Endothelial cell of umbilical vein (primary cell): ENCODE measurements at regions of chr10 and their contacts with region 1.

Region 1: DNA sequence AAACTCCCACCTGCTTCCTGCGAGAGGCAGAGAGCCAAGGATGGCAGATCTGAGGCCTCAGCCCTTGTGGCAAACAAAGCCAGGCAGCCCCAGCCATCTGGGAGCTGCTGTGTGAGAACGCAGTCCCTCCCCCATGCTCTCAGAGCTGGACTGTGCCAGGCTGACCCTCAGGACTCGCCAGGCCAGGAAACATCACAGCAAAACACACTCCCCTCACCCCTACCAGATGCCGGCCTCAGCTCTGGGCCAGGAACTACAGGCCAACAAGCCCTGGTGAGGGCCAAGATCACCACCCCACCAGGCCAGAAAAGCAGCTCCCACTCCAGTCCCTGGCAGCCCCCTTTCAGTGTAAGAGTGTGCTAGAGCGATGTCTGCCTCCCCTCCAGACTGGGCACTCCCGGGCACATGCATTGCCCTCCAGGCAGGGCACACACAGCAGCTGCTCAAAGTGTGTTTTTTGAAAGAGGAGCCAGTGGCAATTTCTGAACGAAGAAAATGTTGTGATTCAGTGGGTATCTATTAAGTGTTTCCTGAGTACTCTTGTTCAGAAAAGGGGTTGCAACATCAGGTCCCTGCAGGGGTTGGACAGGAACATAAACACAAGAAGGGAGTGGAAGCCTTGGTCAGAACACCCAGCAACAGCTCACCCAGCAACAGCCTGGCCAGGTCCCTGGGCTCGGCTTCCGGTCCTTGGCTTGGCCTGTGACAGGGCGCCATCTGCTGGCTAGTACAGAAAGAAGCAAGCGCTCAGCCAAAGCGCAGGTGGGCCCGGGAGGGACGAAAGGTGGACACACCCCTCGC is 18.3 kb downstream of the LRRC20 start:
- DNase-seq: peak; percentile 79
- H3K4me3 ChIP-seq: no peak overlapping the region
- H3K27ac ChIP-seq: no peak overlapping the region
- H3K4me1 ChIP-seq: no peaks in the 10 kb centered on the region
- H3K27me3 ChIP-seq: no peaks in the 10 kb centered on the region
- CTCF ChIP-seq: peak; percentile 82 to 95
- POLR2A ChIP-seq: no peak

Region 2: DNA sequence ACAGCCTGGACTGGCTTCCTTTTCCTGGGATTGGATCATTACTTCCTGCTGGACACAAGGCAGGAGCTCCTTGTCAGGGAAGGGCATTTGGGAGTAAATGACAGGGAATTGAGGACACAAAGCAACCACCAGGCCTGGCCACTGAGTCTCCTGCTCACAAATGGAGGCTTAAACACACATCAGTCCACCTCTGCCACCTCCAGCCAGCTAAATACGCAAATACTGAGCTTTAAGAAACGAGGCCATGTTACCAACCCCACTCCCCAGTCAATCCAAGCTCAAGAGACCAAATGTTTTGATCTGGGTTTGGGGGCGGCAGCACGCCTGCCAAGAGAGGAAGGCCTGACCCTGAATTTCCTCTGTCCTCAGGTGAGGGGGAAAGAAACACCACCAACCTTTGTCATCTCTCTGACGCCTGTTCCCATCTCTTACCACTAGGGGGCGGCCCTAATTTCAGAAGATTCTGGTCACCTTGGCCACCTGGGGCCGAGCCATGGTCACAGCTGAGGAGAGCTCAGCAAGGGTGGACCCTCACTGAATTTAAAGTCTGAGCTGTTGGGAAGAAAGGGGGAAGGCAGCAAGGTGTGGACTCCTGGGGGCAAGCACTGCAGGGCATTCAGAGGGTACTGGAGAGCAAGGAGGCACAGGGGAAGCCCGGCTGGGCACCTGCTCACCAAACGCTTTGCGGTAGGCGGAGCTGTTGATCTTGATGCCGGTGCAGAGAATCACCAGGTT is 248.1 kb before region 1 on chr10:
- CTCF ChIA-PET with region 1: interaction called, 18 read pairs
- POLR2A ChIA-PET with region 1: no interaction called
- dilution Hi-C with region 1: no loop called
- intact Hi-C with region 1: loop called (anchors 1 kb)
- DNase-seq: peak; percentile 35
- H3K4me3 ChIP-seq: no peak overlapping the region
- H3K27ac ChIP-seq: no peak overlapping the region
- H3K4me1 ChIP-seq: peaks cover 6% of the 10 kb centered on the region
- H3K27me3 ChIP-seq: no peaks in the 10 kb centered on the region
- CTCF ChIP-seq: peak; percentile 85 to 95
- POLR2A ChIP-seq: no peak

Region 3: GRCh38 chr10:70227548-70228320 is 136.4 kb before region 1 on chr10:
- CTCF ChIA-PET with region 1: interaction called, 498 read pairs
- POLR2A ChIA-PET with region 1: interaction called, 3 read pairs
- dilution Hi-C with region 1: no loop called
- intact Hi-C with region 1: no loop called
- DNase-seq: no peak
- H3K4me3 ChIP-seq: no peak overlapping the region
- H3K27ac ChIP-seq: no peak overlapping the region
- H3K4me1 ChIP-seq: peaks cover 7% of the 10 kb centered on the region
- H3K27me3 ChIP-seq: no peaks in the 10 kb centered on the region
- CTCF ChIP-seq: no peak
- POLR2A ChIP-seq: no peak

Region 4: DNA sequence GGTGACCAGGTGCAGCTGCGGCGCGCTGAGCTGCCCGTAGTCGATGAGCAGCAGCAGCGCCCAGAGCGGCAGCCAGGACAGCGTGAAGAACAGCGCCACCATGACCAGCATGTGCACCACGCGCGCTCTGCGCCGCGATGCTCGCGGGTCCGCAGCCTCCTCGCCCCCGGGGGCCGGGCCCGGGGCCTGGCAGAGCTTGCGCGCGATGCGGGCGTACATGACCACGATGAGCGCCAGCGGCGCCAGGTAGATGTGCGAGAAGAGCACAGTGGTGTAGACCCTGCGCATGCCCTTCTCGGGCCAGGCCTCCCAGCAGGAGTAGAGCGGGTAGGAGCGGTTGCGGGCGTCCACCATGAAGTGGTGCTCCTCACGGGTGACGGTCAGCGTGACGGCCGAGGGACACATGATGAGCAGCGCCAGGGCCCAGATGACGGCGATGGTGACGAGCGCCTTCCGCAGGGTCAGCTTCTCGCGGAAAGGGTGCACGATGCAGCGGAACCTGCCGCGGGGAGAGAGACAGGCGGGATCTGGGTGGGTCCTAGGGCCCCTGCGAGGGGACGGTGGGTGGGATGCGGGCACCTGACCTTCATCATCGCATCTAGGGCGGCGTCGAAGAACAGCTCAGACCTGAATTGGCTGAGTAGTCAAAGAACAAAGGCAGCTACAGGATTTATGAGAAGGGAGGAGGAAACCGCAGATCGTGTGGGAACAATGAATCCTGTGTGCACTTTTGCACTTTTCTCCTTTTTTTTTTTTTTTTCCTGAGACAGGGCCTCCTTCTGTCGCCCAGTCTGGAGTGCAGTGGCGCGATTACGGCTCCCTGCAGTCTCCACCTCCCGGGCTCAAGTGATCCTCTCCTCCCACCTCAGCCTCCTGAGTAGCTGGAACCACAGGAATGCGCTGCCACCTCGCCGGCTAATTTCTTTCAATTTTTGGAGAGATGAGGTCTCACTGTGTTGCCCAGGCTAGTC is 108.6 kb before region 1 on chr10:
- CTCF ChIA-PET with region 1: interaction called, 11 read pairs
- POLR2A ChIA-PET with region 1: no interaction called
- dilution Hi-C with region 1: no loop called
- intact Hi-C with region 1: no loop called
- DNase-seq: peak; percentile 45
- H3K4me3 ChIP-seq: no peak overlapping the region
- H3K27ac ChIP-seq: no peak overlapping the region
- H3K4me1 ChIP-seq: peaks cover 3% of the 10 kb centered on the region
- H3K27me3 ChIP-seq: peaks cover 48 to 64% of the 10 kb centered on the region in 2 experiments
- CTCF ChIP-seq: peak in 1 of 2 donors; percentile 7
- POLR2A ChIP-seq: no peak

Region 5: DNA sequence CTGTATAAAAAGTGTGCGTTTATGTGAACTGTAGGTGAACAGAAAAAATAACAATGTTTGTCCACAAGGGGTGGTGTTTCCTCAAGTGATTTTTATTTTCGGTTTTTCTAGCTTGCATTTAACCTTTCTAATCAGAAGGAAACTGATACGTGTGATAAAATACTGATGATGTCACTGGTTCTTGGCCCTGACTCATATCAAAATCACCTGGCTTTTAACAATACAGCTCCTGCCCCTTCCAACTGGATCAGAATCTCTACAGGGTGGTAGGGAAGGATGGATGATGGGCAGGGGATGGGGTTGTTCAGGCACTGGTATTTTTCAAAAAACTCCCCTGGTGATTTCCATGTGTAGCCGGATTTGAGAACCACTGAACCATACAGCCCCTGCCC is 91.2 kb before region 1 on chr10:
- CTCF ChIA-PET with region 1: interaction called, 30 read pairs
- POLR2A ChIA-PET with region 1: no interaction called
- dilution Hi-C with region 1: no loop called
- intact Hi-C with region 1: loop called (anchors 2 kb)
- DNase-seq: peak; percentile 21
- H3K4me3 ChIP-seq: no peak overlapping the region
- H3K27ac ChIP-seq: no peak overlapping the region
- H3K4me1 ChIP-seq: no peaks in the 10 kb centered on the region
- H3K27me3 ChIP-seq: peaks cover 10 to 20% of the 10 kb centered on the region in 2 experiments
- CTCF ChIP-seq: peak; percentile 31 to 32
- POLR2A ChIP-seq: no peak

Region 6: DNA sequence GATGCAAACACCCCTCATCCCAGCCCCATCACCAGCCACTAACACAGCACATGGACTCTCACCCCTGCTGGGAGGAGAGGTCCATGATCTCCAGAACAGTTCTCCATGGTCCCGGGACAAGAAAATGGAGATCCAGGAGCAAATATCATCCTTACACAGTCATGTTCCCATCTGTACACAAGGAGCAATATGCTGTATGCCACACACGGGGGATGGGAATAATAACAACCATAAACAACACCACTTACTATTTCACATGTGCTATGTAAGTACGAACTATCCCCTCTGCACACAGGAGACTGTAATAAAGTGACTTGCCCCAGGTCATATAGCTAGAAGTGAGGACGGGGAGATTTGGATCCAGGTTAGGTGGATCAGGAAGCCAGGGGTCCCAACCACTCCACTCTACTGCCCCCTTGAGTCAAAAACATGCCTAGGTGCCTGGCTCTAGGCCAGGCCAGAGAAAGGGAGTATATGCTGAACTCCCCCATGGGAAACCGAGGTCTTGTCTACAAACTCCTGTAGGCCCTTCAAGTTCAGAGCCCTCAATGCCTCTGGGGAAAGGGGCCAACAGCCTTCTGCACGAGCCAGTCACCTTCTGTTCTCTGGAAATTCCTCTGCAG is 15.8 kb before region 1 on chr10:
- CTCF ChIA-PET with region 1: interaction called, 17 read pairs
- POLR2A ChIA-PET with region 1: no interaction called
- dilution Hi-C with region 1: no loop called
- intact Hi-C with region 1: no loop called
- DNase-seq: peak; percentile 30
- H3K4me3 ChIP-seq: no peak overlapping the region
- H3K27ac ChIP-seq: no peak overlapping the region
- H3K4me1 ChIP-seq: no peaks in the 10 kb centered on the region
- H3K27me3 ChIP-seq: peaks cover 0 to 4% of the 10 kb centered on the region in 2 experiments
- CTCF ChIP-seq: peak; percentile 42 to 63
- POLR2A ChIP-seq: no peak

Region 7: DNA sequence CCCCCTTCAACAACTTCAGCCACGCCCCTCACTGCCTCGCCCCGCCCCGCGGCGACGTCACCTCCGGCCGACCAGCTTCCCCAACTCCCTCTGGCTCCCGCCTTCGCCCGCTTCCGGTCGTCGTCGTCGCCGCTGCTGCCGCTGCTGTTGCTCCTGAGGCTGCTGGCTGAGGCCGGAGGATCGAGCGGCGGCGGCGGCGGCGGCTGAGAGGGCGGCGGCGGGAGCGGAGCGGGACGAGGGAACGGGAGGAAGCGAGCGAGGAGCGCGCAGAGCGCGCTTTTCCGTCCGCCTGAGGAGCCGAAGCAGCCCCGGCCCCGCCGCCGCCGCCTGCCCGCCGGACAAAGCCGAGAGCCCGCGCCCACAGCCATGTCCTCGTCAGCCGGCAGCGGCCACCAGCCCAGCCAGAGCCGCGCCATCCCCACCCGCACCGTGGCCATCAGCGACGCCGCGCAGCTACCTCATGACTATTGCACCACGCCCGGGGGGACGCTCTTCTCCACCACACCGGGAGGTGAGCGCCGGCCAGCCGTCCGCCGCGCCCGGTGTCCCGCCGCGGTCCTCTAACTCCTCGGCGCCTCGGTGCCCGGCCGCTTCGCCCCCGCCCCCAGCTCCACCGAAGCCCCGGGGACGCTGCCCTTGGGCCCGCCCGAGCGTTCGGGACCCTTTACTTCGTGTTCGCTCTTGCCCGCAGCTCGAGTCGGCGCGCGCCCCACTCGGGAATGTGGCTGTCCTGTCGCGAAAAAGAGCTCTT is 40.0 kb after region 1 on chr10 and contains the start of gene EIF4EBP2:
- CTCF ChIA-PET with region 1: interaction called, 21 read pairs
- POLR2A ChIA-PET with region 1: no interaction called
- dilution Hi-C with region 1: no loop called
- intact Hi-C with region 1: no loop called
- DNase-seq: peak; percentile 99
- H3K4me3 ChIP-seq: peak within 1 kb of the TSS; percentile 64 to 83 (median 79)
- H3K27ac ChIP-seq: peak within 1 kb of the TSS; percentile 42
- H3K4me1 ChIP-seq: peaks cover 28% of the 10 kb centered on the region
- H3K27me3 ChIP-seq: no peaks in the 10 kb centered on the region
- CTCF ChIP-seq: no peak
- POLR2A ChIP-seq: peak; percentile 90
- total RNA-seq, gene EIF4EBP2: 46.6 and 47.0 TPM in 2 replicates